Left ventricle myocardium superior (tissue), 1 donor: ENCODE measurements at regions of chr12 and their contacts with region 1.

Region 1: GRCh38 chr12:50055831-50056638 is 1.4 kb upstream of the ASIC1 start:
- DNase-seq: peak; percentile 61
- ATAC-seq: peak; percentile 59

Region 2: GRCh38 chr12:49967042-49967776 is 88.8 kb before region 1 on chr12:
- intact Hi-C with region 1: loop called (anchors 5 kb)
- DNase-seq: peak; percentile 94
- ATAC-seq: peak; percentile 80

Region 3: DNA sequence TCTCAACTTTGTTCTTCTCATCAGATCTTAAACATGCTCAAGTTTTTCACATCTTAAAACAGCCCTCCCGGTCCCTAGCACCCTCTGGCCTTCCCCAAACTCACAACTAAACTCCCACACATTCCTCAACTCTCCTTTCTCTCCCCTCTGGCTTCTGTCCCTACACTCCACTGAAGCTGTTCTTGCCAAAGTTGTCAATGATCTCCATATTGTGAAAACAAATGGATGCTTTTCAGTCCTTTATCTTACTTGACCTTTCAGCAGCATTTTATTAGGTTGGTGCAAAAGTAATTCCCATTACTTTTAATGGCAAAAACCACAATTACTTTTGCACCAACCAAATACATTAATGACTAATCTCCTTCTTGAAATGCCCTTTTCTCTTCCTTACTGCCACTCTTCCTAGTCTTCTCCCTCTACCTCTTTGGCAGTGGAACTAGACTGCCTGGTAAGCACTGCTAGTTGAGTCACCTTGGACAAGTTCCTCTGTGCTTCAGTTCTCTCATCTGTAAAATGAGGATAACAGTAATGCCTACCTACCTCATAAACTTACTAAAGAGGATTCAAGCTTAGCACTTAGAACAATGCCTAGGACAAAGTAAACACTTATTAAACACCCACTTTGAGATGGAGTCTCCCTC is 95.1 kb after region 1 on chr12:
- intact Hi-C with region 1: no loop called
- DNase-seq: no peak
- ATAC-seq: no peak

Region 4: GRCh38 chr12:50162230-50162629 is 106.2 kb after region 1 on chr12:
- intact Hi-C with region 1: no loop called
- DNase-seq: no peak
- ATAC-seq: no peak